ENCODE measurements at regions of chr12 and their contacts with region 1.

Region 1: DNA sequence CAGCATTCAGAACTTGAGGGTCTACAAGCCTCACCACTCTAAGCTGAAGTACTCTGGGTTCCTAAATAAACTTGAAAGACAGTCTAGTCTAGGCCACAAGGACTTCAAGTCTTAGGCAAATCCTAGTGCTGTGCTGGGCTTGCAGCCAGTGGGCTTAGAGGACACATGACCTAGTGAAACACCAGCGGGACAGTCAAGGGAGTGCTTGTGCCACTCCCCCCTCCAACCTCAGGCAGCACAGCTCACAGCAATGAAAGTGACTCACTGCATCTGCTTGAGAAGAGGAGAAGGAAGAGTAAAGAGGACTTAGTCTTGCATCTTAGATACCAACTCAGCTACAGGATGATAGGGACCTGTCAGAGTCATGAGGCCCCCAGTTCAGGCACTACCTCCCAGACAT is 438.1 kb downstream of the IPO8 start:
- DNase-seq: no peak
- ATAC-seq: no peak
- H3K4me3 ChIP-seq: no peak overlapping the region
- H3K27ac ChIP-seq: no peak overlapping the region
- H3K4me1 ChIP-seq: no peaks in the 10 kb centered on the region
- H3K27me3 ChIP-seq: no peaks in the 10 kb centered on the region
- CTCF ChIP-seq: no peak

Region 2: GRCh38 chr12:30304528-30304927 is 46.9 kb after region 1 on chr12:
- intact Hi-C with region 1: loop called in 1 of 10 experiments (anchors 2 kb)
- DNase-seq: no peak
- ATAC-seq: no peak
- H3K4me3 ChIP-seq: no peak overlapping the region
- H3K27ac ChIP-seq: no peak overlapping the region
- H3K4me1 ChIP-seq: no peaks in the 10 kb centered on the region
- H3K27me3 ChIP-seq: no peaks in the 10 kb centered on the region
- CTCF ChIP-seq: no peak

Measured in heart right ventricle (tissue), 16 donors.